ENCODE measurements at regions of chr9 and their contacts with region 1.

Region 1: GRCh38 chr9:92325269-92325990 is at the starts of genes CENPP and NOL8:
- DNase-seq: peak; percentile 59
- H3K4me3 ChIP-seq: peak within 1 kb of the TSS; percentile 95
- H3K27ac ChIP-seq: peak within 1 kb of the TSS; percentile 99
- H3K27me3 ChIP-seq: no peaks in the 10 kb centered on the region
- CTCF ChIP-seq: no peak
- polyA plus RNA-seq, gene CENPP: 2.2 and 4.4 TPM in 2 replicates
- polyA plus RNA-seq, gene NOL8: 19.1 and 27.9 TPM in 2 replicates

Region 2: GRCh38 chr9:92342825-92343488 is 17.5 kb after region 1 on chr9:
- CTCF ChIA-PET with region 1: interaction called, 16 read pairs
- POLR2A ChIA-PET with region 1: interaction called, 3 read pairs
- DNase-seq: no peak
- H3K4me3 ChIP-seq: no peak overlapping the region
- H3K27ac ChIP-seq: no peak overlapping the region
- H3K27me3 ChIP-seq: no peaks in the 10 kb centered on the region
- CTCF ChIP-seq: 0 out of 2 replicates have a peak, but pooled peaks have one; percentile 30

Region 3: GRCh38 chr9:92438900-92439526 is 113.6 kb after region 1 on chr9:
- CTCF ChIA-PET with region 1: interaction called, 41 read pairs
- POLR2A ChIA-PET with region 1: no interaction called
- DNase-seq: no peak
- H3K4me3 ChIP-seq: no peak overlapping the region
- H3K27ac ChIP-seq: no peak overlapping the region
- H3K27me3 ChIP-seq: no peaks in the 10 kb centered on the region
- CTCF ChIP-seq: peak; percentile 50

Region 4: DNA sequence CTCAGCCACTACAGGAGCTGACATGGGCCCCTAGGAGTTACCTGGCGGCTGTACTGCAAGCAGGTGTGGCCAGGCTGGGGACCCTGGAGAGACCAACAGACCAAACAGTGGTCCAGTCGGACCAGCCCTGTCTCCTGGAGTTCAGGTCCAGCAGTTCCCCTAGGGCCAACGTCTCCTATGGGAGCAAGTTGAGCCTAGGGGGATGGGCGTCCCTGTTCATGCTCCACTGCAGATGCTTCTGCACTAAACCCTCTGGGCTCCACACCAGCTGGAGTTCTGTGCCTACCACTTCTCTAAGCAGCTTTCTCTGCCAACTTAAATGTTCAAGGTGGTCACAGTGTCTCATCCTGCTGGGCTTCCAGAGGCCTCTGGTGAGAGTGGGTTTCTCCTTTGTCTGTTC is 119.4 kb after region 1 on chr9:
- CTCF ChIA-PET with region 1: interaction called, 41 read pairs
- POLR2A ChIA-PET with region 1: interaction called, 3 read pairs
- DNase-seq: no peak
- H3K4me3 ChIP-seq: no peak overlapping the region
- H3K27ac ChIP-seq: no peak overlapping the region
- H3K27me3 ChIP-seq: no peaks in the 10 kb centered on the region
- CTCF ChIP-seq: no peak

Region 5: GRCh38 chr9:92476962-92477361 is 151.5 kb after region 1 on chr9:
- CTCF ChIA-PET with region 1: no interaction called
- POLR2A ChIA-PET with region 1: no interaction called
- DNase-seq: no peak
- H3K4me3 ChIP-seq: no peak overlapping the region
- H3K27ac ChIP-seq: no peak overlapping the region
- H3K27me3 ChIP-seq: no peaks in the 10 kb centered on the region
- CTCF ChIP-seq: no peak

Region 6: GRCh38 chr9:92634712-92635605 is 309.5 kb after region 1 on chr9:
- CTCF ChIA-PET with region 1: interaction called, 48 read pairs
- POLR2A ChIA-PET with region 1: no interaction called
- DNase-seq: peak; percentile 39
- H3K4me3 ChIP-seq: no peak overlapping the region
- H3K27ac ChIP-seq: peak overlapping the region; percentile 31
- H3K27me3 ChIP-seq: no peaks in the 10 kb centered on the region
- CTCF ChIP-seq: peak; percentile 99